Naive thymus-derived CD4-positive, alpha-beta T cell (primary cell): ENCODE measurements at regions of chr5 and their contacts with region 1.

Region 1: DNA sequence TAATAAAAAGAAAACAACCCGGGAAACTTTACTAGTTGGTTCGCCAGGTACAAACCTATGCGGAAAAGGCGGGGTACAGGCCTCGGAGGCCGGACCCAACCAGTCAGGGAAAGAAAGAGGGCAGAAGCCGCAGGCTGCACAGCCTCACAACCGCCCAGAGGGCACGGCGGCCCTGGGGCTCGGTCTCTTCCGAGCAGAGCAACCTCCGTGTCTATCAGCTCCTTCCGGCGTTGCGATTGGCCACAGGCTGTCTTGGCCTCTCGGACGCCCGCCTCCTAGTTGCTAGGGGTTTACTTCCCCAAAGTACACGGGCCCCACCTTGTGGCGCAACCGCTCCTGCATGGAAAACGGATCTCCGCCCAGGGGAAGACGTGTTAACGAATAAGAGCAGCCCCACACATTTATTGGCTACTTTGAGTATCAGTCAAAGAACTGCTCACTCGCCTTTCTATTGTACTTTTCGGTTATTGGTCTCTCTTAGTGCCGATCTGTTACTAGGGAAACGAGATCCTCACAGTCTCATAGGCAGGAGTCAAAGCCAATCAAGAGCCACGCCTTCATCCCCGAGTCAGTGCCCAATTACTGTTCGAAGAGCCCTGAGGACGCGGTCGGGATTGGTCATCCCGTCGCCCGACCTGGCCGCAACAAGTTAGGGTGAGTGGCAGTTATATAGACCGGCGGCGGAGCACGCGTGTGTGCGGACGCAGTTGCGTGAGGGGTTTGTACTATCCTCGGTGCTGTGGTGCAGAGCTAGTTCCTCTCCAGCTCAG is at the start of gene G3BP1:
- DNase-seq: peak; percentile 86 to 100 (median 99)
- ATAC-seq: peak; percentile 86
- H3K4me3 ChIP-seq: peak within 1 kb of the TSS; percentile 93
- H3K4me3 Mint-ChIP-seq: peak within 1 kb of the TSS in 7 of 10 donors; percentile 89 to 97 (median 94)
- H3K27ac ChIP-seq: peak within 1 kb of the TSS; percentile 87
- H3K27ac Mint-ChIP-seq: peak within 1 kb of the TSS in 5 of 9 donors; percentile 79 to 94 (median 87)
- H3K4me1 ChIP-seq: peaks cover 31 to 39% of the 10 kb centered on the region in 2 donors
- H3K4me1 Mint-ChIP-seq: peaks cover 24 to 55% (median 43%) of the 10 kb centered on the region in 7 donors
- H3K27me3 ChIP-seq: no peaks in the 10 kb centered on the region
- H3K27me3 Mint-ChIP-seq: no peaks in the 10 kb centered on the region
- total RNA-seq, gene G3BP1: 86.1 to 244 (median 167) TPM

Region 2: DNA sequence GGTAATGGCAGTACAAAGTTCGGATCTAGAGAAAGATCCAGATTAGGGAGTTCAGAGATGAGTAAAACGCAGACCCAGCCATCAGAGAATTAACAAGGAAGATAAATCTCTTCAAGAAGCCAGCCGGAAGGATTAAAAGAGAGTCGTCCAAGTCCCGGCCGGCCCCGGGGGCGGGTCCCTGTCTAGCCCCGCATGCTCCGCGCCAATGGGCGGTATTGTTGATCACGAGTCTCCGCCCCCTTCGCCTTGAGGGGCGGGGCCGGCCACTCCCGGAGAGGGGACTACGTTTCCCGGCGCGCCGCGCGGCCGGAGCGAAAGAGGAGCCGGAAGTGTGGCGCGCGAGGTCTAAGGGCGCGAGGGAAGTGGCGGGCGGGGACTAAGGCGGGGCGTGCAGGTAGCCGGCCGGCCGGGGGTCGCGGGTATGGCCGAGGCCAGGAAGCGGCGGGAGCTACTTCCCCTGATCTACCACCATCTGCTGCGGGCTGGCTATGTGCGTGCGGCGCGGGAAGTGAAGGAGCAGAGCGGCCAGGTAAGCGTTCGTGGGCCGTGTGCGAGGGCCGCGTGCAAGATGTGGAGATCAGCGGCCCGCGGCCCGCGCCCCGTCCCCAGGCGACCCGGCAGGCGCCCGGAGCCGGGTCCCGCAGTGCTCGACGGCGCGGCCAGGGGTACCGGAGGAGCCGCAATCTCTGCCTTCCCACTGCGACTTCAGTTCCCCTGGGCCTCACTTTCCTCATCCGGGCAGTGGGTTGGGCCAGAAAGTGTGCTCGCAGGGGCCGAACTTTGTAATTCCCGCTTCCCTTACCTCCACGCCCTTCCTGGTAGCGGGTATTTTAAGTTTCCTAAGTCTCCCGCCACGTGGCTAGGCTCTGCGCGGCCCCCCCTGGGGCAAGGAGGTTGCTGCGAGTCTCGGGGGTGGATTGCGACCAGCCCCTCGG is 1413.9 kb before region 1 on chr5 and contains the start of gene TCOF1:
- CTCF ChIA-PET with region 1: no interaction called
- POLR2A ChIA-PET with region 1: no interaction called
- intact Hi-C with region 1: loop called (anchors 1 to 10 kb)
- DNase-seq: peak; percentile 94 to 98 (median 97)
- ATAC-seq: peak; percentile 100
- H3K4me3 ChIP-seq: peak within 1 kb of the TSS; percentile 62
- H3K4me3 Mint-ChIP-seq: peak within 1 kb of the TSS; percentile 85 to 95 (median 91)
- H3K27ac ChIP-seq: peak within 1 kb of the TSS; percentile 81
- H3K27ac Mint-ChIP-seq: peak within 1 kb of the TSS; percentile 87 to 97 (median 96)
- H3K4me1 ChIP-seq: peaks cover 23 to 24% of the 10 kb centered on the region in 2 donors
- H3K4me1 Mint-ChIP-seq: peaks cover 35 to 54% (median 48%) of the 10 kb centered on the region in 7 donors
- H3K27me3 ChIP-seq: no peaks in the 10 kb centered on the region
- H3K27me3 Mint-ChIP-seq: peaks cover 0 to 2% (median 0%) of the 10 kb centered on the region in 5 donors
- total RNA-seq, gene TCOF1: 45.9 to 60.0 (median 54.6) TPM

Region 3: GRCh38 chr5:151080623-151081430 is 690.6 kb before region 1 on chr5 and contains the start of gene TNIP1:
- CTCF ChIA-PET with region 1: no interaction called
- POLR2A ChIA-PET with region 1: no interaction called
- intact Hi-C with region 1: loop called (anchors 2 to 5 kb)
- DNase-seq: peak; percentile 86 to 99 (median 90)
- ATAC-seq: peak; percentile 94
- H3K4me3 ChIP-seq: peak within 1 kb of the TSS; percentile 86
- H3K4me3 Mint-ChIP-seq: peak within 1 kb of the TSS; percentile 85 to 95 (median 90)
- H3K27ac ChIP-seq: peak within 1 kb of the TSS; percentile 96
- H3K27ac Mint-ChIP-seq: peak within 1 kb of the TSS; percentile 86 to 95 (median 91)
- H3K4me1 ChIP-seq: peaks cover 37 to 69% of the 10 kb centered on the region in 2 donors
- H3K4me1 Mint-ChIP-seq: peaks cover 53 to 84% (median 73%) of the 10 kb centered on the region in 7 donors
- H3K27me3 ChIP-seq: no peaks in the 10 kb centered on the region
- H3K27me3 Mint-ChIP-seq: no peaks in the 10 kb centered on the region
- total RNA-seq, gene TNIP1: 124 to 234 (median 131) TPM

Region 4: DNA sequence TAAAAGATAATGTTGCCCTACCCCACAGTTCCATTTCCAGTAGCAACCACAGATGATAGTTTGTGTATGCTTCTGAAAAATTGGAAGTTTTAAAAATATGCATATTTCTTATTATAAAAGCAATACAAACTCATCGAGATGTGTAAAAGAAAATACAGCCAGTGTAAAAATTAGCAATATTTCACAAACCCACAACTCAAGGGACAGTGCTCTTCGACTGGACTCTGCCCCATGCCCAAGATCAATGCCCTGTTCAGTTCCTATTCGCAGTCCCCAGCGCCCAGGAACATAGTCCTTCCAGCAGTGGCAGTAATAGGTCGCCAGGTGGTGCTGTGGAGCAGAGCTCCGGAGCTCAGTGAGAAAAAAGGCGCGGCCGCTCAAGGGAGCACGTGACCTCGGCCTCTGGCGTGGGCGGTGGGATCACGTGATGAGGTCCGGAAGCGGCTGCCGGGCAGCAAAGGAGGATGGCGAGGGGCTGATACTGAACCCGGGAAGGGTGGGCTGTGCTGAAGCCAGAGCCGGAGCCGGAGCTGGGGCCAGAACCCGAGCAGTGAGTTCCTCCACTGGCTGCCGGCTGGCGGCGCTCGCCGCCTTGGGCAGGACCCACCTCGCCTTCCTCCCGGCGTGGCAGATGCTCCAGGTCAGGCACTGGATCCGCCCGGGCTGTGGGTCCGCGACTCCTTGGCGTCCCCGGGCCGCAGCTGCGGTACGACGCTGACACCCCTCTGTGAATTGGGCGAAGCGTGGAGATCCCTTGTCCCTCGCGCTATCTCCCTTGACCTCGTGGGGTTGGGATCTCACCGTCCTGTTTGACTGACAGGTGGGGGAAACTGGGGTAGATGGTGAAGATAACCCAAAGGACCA is 324.0 kb before region 1 on chr5 and contains the start of gene SLC36A1:
- CTCF ChIA-PET with region 1: no interaction called
- POLR2A ChIA-PET with region 1: interaction called, 6 read pairs
- intact Hi-C with region 1: loop called (anchors 1 kb)
- DNase-seq: peak; percentile 77 to 99 (median 85)
- ATAC-seq: peak; percentile 100
- H3K4me3 ChIP-seq: peak within 1 kb of the TSS; percentile 77
- H3K4me3 Mint-ChIP-seq: peak within 1 kb of the TSS; percentile 82 to 98 (median 94)
- H3K27ac ChIP-seq: peak within 1 kb of the TSS; percentile 70
- H3K27ac Mint-ChIP-seq: peak within 1 kb of the TSS; percentile 43 to 95 (median 90)
- H3K4me1 ChIP-seq: peaks cover 6 to 15% of the 10 kb centered on the region in 2 donors
- H3K4me1 Mint-ChIP-seq: peaks cover 18 to 22% (median 19%) of the 10 kb centered on the region in 7 donors
- H3K27me3 ChIP-seq: peaks cover 0 to 3% of the 10 kb centered on the region in 2 donors
- H3K27me3 Mint-ChIP-seq: peaks cover 7 to 45% (median 14%) of the 10 kb centered on the region in 5 donors
- total RNA-seq, gene SLC36A1: 4.6 to 16.6 (median 7.1) TPM

Region 5: GRCh38 chr5:151740336-151740942 is 31.0 kb before region 1 on chr5:
- CTCF ChIA-PET with region 1: interaction called, 3 read pairs
- POLR2A ChIA-PET with region 1: interaction called, 4 read pairs
- intact Hi-C with region 1: loop called (anchors 1 kb)
- DNase-seq: peak in 7 of 9 donors; percentile 9 to 57 (median 47)
- ATAC-seq: peak; percentile 71
- H3K4me3 ChIP-seq: no peak overlapping the region
- H3K4me3 Mint-ChIP-seq: no peak overlapping the region
- H3K27ac ChIP-seq: no peak overlapping the region
- H3K27ac Mint-ChIP-seq: peak overlapping the region in 1 of 9 donors; percentile 23
- H3K4me1 ChIP-seq: peaks cover 5 to 8% of the 10 kb centered on the region in 2 donors
- H3K4me1 Mint-ChIP-seq: peaks cover 5 to 30% (median 20%) of the 10 kb centered on the region in 7 donors
- H3K27me3 ChIP-seq: no peaks in the 10 kb centered on the region
- H3K27me3 Mint-ChIP-seq: no peaks in the 10 kb centered on the region

Region 6: GRCh38 chr5:151847871-151848270 is 76.4 kb after region 1 on chr5:
- CTCF ChIA-PET with region 1: no interaction called
- POLR2A ChIA-PET with region 1: no interaction called
- intact Hi-C with region 1: no loop called
- DNase-seq: no peak
- ATAC-seq: no peak
- H3K4me3 ChIP-seq: no peak overlapping the region
- H3K4me3 Mint-ChIP-seq: no peak overlapping the region
- H3K27ac ChIP-seq: no peak overlapping the region
- H3K27ac Mint-ChIP-seq: no peak overlapping the region
- H3K4me1 ChIP-seq: no peaks in the 10 kb centered on the region
- H3K4me1 Mint-ChIP-seq: no peaks in the 10 kb centered on the region
- H3K27me3 ChIP-seq: no peaks in the 10 kb centered on the region
- H3K27me3 Mint-ChIP-seq: no peaks in the 10 kb centered on the region

Region 7: DNA sequence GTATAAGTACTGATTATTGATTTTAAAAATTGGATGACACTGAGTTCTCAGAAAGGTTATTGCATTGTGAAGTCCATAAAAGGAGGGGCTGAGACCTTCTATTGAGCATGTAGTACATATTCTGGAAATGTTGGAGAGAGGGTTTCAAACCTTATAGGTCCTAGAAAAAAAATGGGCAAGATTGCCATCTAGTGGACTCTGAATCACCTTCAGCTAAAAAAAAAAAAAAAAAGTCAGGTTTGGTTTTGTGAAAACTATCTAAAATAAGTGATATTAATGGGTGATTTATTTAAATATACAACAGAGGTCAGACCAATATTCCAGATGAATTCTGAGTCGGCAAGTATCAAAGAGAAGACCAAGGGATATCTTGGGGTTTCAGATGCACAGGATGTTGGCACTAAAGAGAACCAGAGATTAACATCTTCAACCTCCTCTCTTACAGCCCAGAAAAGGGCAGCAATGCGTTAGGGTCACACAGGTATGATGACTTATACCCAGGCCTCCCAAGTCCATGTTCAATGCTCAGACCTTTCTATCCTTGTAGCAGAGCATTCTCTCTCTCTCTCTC is 743.5 kb after region 1 on chr5:
- CTCF ChIA-PET with region 1: no interaction called
- POLR2A ChIA-PET with region 1: no interaction called
- intact Hi-C with region 1: loop called in 1 of 2 experiments (anchors 5 kb)
- DNase-seq: no peak
- ATAC-seq: no peak
- H3K4me3 ChIP-seq: no peak overlapping the region
- H3K4me3 Mint-ChIP-seq: no peak overlapping the region
- H3K27ac ChIP-seq: no peak overlapping the region
- H3K27ac Mint-ChIP-seq: no peak overlapping the region
- H3K4me1 ChIP-seq: no peaks in the 10 kb centered on the region
- H3K4me1 Mint-ChIP-seq: peaks cover 0 to 2% (median 0%) of the 10 kb centered on the region in 7 donors
- H3K27me3 ChIP-seq: no peaks in the 10 kb centered on the region
- H3K27me3 Mint-ChIP-seq: peaks cover 10 to 27% (median 20%) of the 10 kb centered on the region in 5 donors